ENCODE measurements at regions of chr20 and their contacts with region 1.

Region 1: GRCh38 chr20:22775671-22776139 is 191.3 kb upstream of the FOXA2 start:
- DNase-seq: peak; percentile 86 to 97
- ATAC-seq: peak; percentile 94 to 95
- H3K4me3 ChIP-seq: no peak overlapping the region
- H3K27ac ChIP-seq: peak overlapping the region; percentile 92 to 98
- H3K4me1 ChIP-seq: peaks cover 70% of the 10 kb centered on the region
- CTCF ChIP-seq: no peak
- EP300 ChIP-seq: peak; percentile 99
- POLR2A ChIP-seq: no peak
- RAD21 ChIP-seq: peak; percentile 49 to 85

Region 2: DNA sequence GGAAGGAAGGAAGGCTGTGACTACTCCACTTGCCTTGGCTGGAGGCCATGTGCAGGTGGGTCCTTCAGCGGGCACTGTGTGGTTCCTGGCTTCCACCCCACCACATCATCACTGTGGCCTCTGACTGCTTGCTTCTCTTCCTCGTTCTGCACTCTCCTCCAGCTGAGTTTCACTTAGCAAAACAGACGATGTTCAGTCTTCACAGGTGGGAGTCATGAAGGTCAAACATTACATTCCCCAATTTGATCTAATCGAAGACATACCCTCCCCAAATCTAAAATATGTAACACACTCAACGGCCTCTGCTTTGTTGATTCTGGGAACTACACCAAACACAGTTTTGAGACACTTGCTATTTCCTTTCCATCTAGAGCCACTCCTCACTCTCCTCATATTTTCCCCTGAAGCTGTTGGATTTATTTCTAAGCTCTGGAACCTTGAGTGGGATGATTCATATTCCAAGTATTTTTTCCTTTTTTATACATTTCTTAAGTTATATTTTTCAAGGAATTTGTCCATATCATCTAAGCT is 58.8 kb before region 1 on chr20:
- CTCF ChIA-PET with region 1: interaction called, 13 read pairs
- POLR2A ChIA-PET with region 1: interaction called, 3 read pairs
- DNase-seq: peak; percentile 34 to 56
- ATAC-seq: peak; percentile 70 to 77
- H3K4me3 ChIP-seq: no peak overlapping the region
- H3K27ac ChIP-seq: peak overlapping the region; percentile 80 to 85
- H3K4me1 ChIP-seq: peaks cover 50% of the 10 kb centered on the region
- CTCF ChIP-seq: no peak
- EP300 ChIP-seq: no peak; a peak in 1 of 5 replicates
- POLR2A ChIP-seq: no peak
- RAD21 ChIP-seq: 0 out of 5 replicates have a peak, but pooled peaks of 1 of the 2 experiments have one; percentile 7

Region 3: DNA sequence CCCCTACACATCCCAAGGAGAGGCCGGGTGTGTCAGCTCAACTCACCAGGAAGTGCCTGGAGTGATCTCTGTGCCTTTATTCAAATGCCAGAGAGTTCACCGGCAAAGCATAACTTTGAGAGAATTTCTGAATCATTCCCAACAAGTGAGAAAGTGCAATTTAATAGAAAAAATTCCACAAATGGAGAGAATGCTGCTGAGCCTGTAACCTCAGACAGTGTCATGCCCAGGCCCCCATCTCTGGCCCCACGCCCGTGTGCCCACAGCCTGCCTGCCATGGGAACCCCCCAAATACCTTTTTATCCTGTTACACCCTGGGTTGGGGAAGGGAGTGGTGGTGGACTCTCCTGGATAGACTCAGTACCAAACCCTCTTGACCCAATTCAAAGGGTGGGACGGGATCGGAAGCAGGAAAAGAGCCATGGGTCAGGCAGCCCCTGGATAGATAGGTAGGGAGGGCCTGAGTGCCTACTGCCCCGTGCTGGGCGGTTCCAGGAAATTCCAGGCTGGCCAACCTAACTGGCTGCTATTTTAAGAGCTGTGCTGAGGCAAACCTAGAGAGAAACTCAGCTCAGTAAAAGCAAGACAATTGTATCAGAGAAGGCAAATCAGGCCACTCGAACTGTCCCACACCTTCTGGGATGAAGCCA is 12.3 kb before region 1 on chr20:
- CTCF ChIA-PET with region 1: interaction called, 5 read pairs
- POLR2A ChIA-PET with region 1: interaction called, 20 read pairs
- DNase-seq: peak; percentile 55 to 84
- ATAC-seq: peak; percentile 88
- H3K4me3 ChIP-seq: peak overlapping the region; percentile 4; the same call in 2 of the 3 replicates
- H3K27ac ChIP-seq: peak overlapping the region; percentile 92 to 98
- H3K4me1 ChIP-seq: peaks cover 41% of the 10 kb centered on the region
- CTCF ChIP-seq: no peak
- EP300 ChIP-seq: peak in 1 of 2 experiments; percentile 66; a peak in 1 of 5 replicates
- POLR2A ChIP-seq: no peak
- RAD21 ChIP-seq: peak in 1 of 2 experiments; percentile 7; a peak in 2 of 5 replicates

Region 4: GRCh38 chr20:22795871-22796270 is 20.2 kb after region 1 on chr20:
- CTCF ChIA-PET with region 1: interaction called, 30 read pairs
- POLR2A ChIA-PET with region 1: interaction called, 29 read pairs
- DNase-seq: peak; percentile 79 to 97
- ATAC-seq: peak; percentile 92
- H3K4me3 ChIP-seq: no peak overlapping the region
- H3K27ac ChIP-seq: peak overlapping the region; percentile 92 to 97
- H3K4me1 ChIP-seq: peaks cover 66% of the 10 kb centered on the region
- CTCF ChIP-seq: no peak
- EP300 ChIP-seq: peak; percentile 96 to 97; a peak in 4 of 5 replicates
- POLR2A ChIP-seq: no peak
- RAD21 ChIP-seq: peak; percentile 38 to 78

Region 5: GRCh38 chr20:22805219-22805618 is 29.5 kb after region 1 on chr20:
- CTCF ChIA-PET with region 1: interaction called, 21 read pairs
- POLR2A ChIA-PET with region 1: interaction called, 5 read pairs
- DNase-seq: peak; percentile 33 to 80
- ATAC-seq: peak; percentile 49 to 62; a peak in 4 of 6 replicates
- H3K4me3 ChIP-seq: no peak overlapping the region
- H3K27ac ChIP-seq: peak overlapping the region; percentile 74 to 77; a peak in 5 of 6 replicates
- H3K4me1 ChIP-seq: peaks cover 51% of the 10 kb centered on the region
- CTCF ChIP-seq: no peak
- EP300 ChIP-seq: no peak
- POLR2A ChIP-seq: no peak
- RAD21 ChIP-seq: no peak

Region 6: GRCh38 chr20:22819112-22819511 is 43.4 kb after region 1 on chr20:
- CTCF ChIA-PET with region 1: no interaction called
- POLR2A ChIA-PET with region 1: no interaction called
- DNase-seq: no peak
- ATAC-seq: no peak
- H3K4me3 ChIP-seq: no peak overlapping the region
- H3K27ac ChIP-seq: 0 out of 6 replicates have a peak overlapping the region, but pooled peaks of 1 of the 2 experiments have one; percentile 0
- H3K4me1 ChIP-seq: no peaks in the 10 kb centered on the region
- CTCF ChIP-seq: no peak
- EP300 ChIP-seq: no peak
- POLR2A ChIP-seq: no peak
- RAD21 ChIP-seq: no peak

Region 7: GRCh38 chr20:23350196-23350903 is 574.6 kb after region 1 on chr20 and contains the start of gene NXT1:
- CTCF ChIA-PET with region 1: no interaction called
- POLR2A ChIA-PET with region 1: interaction called, 17 read pairs
- DNase-seq: peak; percentile 95 to 99
- ATAC-seq: peak; percentile 86 to 93
- H3K4me3 ChIP-seq: peak within 1 kb of the TSS; percentile 81
- H3K27ac ChIP-seq: peak within 1 kb of the TSS; percentile 94 to 95
- H3K4me1 ChIP-seq: peaks cover 21% of the 10 kb centered on the region
- CTCF ChIP-seq: no peak
- EP300 ChIP-seq: no peak; a peak in 1 of 5 replicates
- POLR2A ChIP-seq: peak; percentile 79
- RAD21 ChIP-seq: no peak
- polyA plus RNA-seq, gene NXT1: 68.2 and 71.8 TPM in 2 replicates